ENCODE measurements at regions of chr20 and their contacts with region 1.

Region 1: DNA sequence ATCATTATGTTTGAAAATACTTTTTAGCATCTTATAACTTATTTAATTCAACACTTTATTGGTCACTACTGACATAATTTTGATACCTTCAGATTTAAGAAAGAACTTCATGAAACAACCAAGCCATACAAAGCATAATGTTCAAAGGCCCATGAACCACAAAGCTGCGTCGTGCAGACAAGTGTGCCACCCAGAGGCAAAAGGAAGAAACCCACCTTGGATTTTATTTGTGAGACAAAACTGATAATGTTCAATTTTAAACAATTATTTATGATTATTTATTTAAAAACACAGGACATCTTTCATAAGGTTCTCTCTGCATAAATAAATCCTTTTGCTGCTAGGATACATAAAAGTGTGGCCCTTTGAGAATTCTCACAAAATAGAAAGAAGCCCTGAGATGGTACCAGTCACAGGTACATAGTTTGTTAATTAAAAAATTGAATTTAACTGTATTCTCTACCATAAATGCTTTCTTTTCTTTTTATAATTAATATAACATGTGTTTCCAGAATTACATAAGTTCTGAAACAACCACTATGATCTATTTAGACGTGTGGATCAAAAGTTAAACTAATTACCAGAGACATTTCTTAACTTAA is 143.7 kb downstream of the RALGAPA2 start:
- DNase-seq: peak; percentile 58
- ATAC-seq: peak; percentile 82
- H3K4me3 ChIP-seq: no peak overlapping the region
- H3K27ac ChIP-seq: no peak overlapping the region
- H3K4me1 ChIP-seq: no peaks in the 10 kb centered on the region
- H3K27me3 ChIP-seq: no peaks in the 10 kb centered on the region
- CTCF ChIP-seq: peak; percentile 95
- POLR2A ChIP-seq: peak; percentile 41; the same call in 1 of the 2 replicates
- RAD21 ChIP-seq: peak; percentile 97

Region 2: DNA sequence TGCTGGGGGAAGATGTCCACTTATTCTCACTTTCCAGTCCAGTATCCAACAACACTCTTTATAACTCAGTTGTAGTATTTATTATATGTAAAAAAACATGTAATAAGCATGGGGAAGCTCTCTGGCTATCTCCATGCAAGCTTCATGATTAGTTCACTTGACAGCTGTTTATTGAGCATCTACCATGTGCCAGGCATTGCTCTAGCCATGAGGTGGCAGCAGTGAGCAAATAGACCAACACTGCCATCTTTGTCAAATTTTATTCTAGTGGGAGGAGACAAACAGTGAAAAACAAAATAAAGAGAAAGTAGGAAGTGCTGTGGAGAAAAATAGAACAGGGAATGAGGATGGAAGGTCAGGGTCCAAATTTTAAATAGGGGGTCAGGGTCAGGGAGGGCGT is 384.6 kb before region 1 on chr20:
- CTCF ChIA-PET with region 1: no interaction called
- POLR2A ChIA-PET with region 1: no interaction called
- dilution Hi-C with region 1: no loop called
- in situ Hi-C with region 1: no loop called
- intact Hi-C with region 1: loop called (anchors 1 kb)
- DNase-seq: no peak
- ATAC-seq: no peak
- H3K4me3 ChIP-seq: no peak overlapping the region
- H3K27ac ChIP-seq: no peak overlapping the region
- H3K4me1 ChIP-seq: no peaks in the 10 kb centered on the region
- H3K27me3 ChIP-seq: no peaks in the 10 kb centered on the region
- CTCF ChIP-seq: peak; percentile 35; the same call in 1 of the 2 replicates
- POLR2A ChIP-seq: no peak
- RAD21 ChIP-seq: no peak

Region 3: GRCh38 chr20:20237093-20237959 is 331.4 kb before region 1 on chr20:
- CTCF ChIA-PET with region 1: no interaction called
- POLR2A ChIA-PET with region 1: no interaction called
- dilution Hi-C with region 1: no loop called
- in situ Hi-C with region 1: no loop called
- intact Hi-C with region 1: loop called (anchors 5 kb)
- DNase-seq: peak; percentile 14
- ATAC-seq: peak; percentile 88
- H3K4me3 ChIP-seq: no peak overlapping the region
- H3K27ac ChIP-seq: no peak overlapping the region
- H3K4me1 ChIP-seq: no peaks in the 10 kb centered on the region
- H3K27me3 ChIP-seq: peaks cover 2% of the 10 kb centered on the region
- CTCF ChIP-seq: peak; percentile 65
- POLR2A ChIP-seq: no peak
- RAD21 ChIP-seq: peak; percentile 49

Region 4: DNA sequence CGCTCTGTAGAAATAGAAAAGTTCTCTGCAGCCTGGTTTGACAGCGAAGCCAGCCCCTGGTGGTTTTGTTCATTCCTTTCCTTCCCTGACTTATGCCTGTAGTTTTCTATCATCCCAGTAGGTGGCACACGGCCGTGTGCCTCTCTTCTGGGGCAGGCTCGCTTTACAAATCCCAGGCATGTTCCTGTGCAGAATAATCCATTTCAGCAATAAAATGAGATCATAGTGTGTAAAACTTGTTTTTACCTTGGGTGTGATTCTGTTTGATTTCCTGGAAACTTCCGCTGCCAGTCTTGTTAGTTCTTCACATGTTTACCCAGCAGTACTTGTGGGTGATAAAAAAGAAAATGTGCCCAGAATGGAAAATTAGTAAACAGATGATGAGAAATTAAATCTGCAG is 208.2 kb before region 1 on chr20:
- CTCF ChIA-PET with region 1: no interaction called
- POLR2A ChIA-PET with region 1: no interaction called
- dilution Hi-C with region 1: no loop called
- in situ Hi-C with region 1: loop called (anchors 5 kb)
- intact Hi-C with region 1: loop called (anchors 1 kb)
- DNase-seq: peak; percentile 69
- ATAC-seq: peak; percentile 98
- H3K4me3 ChIP-seq: no peak overlapping the region
- H3K27ac ChIP-seq: no peak overlapping the region
- H3K4me1 ChIP-seq: no peaks in the 10 kb centered on the region
- H3K27me3 ChIP-seq: peaks cover 47% of the 10 kb centered on the region
- CTCF ChIP-seq: peak; percentile 92
- POLR2A ChIP-seq: no peak
- RAD21 ChIP-seq: peak; percentile 86

Region 5: DNA sequence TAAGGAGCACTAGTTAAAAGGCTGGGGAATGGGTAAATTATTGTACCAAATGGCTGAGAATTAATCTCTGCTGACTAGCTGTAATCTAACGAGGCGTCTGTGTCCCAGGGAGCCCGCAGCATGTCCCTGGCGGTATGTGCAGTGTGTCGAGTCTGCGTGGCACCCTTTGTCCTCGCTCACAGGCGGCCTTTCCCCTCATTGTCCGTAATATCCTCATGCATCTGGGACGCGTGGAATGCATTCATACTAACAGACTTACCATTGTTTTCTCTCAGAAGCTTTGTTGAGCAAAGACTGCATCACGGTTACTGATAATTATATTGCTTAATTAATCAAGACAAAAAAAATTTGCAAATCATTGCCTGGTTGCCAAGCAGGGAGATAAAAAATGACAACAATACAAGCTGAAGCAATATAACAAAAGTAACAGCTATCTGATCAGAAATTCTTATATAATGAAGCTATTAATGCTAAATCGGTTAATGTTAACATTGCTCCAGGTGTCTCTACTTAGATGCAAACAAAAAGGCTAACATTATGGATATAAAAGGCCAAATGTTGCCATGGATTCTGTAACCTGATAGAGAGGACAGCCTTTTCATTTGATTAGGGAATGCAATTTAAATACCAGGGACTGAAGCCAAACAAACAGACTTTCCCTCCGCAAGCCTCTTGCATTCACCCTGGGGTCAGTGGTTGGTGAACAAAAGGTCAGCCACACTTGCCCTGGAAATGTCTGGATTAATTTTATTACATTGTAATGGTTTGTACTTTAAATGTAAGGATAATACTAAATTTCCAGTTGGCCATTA is 76.0 kb before region 1 on chr20:
- CTCF ChIA-PET with region 1: no interaction called
- POLR2A ChIA-PET with region 1: no interaction called
- dilution Hi-C with region 1: no loop called
- in situ Hi-C with region 1: no loop called
- intact Hi-C with region 1: no loop called
- DNase-seq: no peak
- ATAC-seq: no peak
- H3K4me3 ChIP-seq: no peak overlapping the region
- H3K27ac ChIP-seq: no peak overlapping the region
- H3K4me1 ChIP-seq: peaks cover 30% of the 10 kb centered on the region
- H3K27me3 ChIP-seq: no peaks in the 10 kb centered on the region
- CTCF ChIP-seq: no peak
- POLR2A ChIP-seq: no peak
- RAD21 ChIP-seq: no peak

Region 6: DNA sequence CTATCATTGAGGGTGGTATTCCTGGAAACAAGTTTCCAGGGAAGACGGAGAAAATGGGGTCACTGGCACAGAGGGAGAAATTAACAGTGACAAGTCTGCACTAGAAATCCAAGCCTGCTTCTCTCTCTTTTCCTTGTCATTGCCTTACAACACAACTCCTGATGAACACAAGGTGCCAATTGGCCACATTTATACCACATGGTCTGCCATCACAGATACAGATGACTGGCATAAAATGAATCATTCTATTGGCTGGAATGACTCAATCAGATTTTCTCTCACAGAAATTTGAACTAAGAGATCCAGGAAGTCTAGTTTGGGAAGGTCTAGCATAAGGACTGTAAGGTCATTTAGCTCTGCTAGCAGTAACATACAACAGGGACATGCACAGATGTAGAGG is 347.1 kb after region 1 on chr20:
- CTCF ChIA-PET with region 1: no interaction called
- POLR2A ChIA-PET with region 1: no interaction called
- dilution Hi-C with region 1: no loop called
- in situ Hi-C with region 1: no loop called
- intact Hi-C with region 1: no loop called
- DNase-seq: no peak
- ATAC-seq: no peak
- H3K4me3 ChIP-seq: no peak overlapping the region
- H3K27ac ChIP-seq: no peak overlapping the region
- H3K4me1 ChIP-seq: no peaks in the 10 kb centered on the region
- H3K27me3 ChIP-seq: no peaks in the 10 kb centered on the region
- CTCF ChIP-seq: no peak
- POLR2A ChIP-seq: no peak
- RAD21 ChIP-seq: no peak

Measured in IMR-90 (cell line).